ENCODE measurements at regions of chr14 and their contacts with region 1.

Region 1: DNA sequence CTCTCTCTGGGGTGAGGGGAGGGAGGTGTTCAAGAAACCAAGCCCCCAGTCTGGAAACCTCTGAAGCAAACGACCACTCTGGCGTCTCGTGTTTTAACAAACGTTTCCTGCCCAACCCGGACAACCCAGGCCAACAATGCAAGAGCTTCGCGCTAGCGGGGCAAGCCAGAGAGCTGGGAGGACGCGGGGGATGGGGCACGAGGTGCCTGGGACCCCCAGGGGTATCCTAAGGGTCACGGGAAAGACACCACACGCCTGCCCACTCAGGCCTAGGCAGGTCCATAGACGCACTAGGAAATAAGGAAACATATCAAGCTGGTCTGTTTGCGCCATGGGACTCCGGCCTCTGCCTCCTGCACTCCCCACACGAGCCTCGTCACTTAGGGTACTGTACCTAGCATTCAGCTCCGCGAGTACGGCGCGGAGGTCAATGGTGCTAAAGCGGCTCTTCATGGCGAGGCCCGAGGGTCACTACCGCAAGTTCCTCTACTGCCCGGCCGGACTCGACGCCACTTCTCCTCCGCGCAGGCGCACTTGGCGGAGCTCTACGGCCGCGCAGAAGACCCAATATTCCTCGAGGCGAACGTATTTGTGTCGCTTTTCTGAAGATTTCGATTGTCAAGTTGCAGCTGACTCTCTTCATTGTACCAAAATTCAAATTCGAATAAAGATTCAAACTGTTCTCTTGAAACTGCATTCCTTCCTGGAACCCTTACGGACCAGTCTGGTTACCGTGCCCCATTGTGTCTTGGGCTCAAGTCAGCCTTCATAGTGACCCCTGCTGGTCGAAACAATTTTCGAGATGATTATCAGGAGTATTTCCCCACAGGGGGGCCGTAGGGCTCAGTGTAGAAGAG is at the start of gene NEMF:
- DNase-seq: peak; percentile 95

Region 2: GRCh38 chr14:50023671-50024490 is 171.4 kb after region 1 on chr14:
- in situ Hi-C with region 1: no loop called
- DNase-seq: no peak

Region 3: DNA sequence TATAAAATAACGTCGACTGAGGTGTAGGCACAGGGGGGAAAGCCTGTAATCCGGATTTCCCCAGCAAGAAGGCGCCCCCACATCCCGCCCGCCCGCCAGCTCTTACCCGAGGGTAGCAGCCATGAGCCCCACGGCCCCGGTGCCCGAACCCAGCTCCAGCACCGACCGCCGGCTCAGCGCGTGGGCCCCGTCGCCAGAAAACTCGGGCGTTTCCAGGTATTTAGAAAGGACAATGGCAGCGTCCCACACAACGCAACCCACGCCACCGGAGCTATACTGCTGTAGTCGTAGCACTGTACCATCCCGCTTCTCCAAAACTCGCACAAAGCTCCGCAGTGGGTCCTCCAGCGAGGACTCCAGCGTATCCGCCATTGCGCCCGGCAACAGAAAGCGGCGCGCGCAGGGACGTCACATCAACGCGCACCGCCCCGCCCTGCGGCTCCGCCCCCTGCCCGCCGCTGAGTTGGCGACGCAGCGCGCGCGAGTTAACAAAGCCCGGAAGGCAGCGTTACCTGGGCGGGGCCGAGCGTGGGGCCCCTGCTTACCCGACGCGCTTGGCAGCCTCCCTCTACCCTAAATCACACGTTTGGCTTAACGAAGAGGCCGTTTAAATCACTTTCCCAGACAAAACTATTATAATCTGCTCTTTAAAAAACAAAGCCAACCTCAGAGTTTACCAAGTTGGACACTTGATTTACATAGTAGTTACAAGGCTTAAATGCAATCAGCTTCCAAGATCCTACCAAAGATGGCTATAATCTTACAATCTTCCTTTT is 263.8 kb after region 1 on chr14 and contains the start of gene VCPKMT:
- in situ Hi-C with region 1: loop called (anchors 25 kb)
- DNase-seq: peak; percentile 95